ENCODE measurements at regions of chr12 and their contacts with region 1.

Region 1: DNA sequence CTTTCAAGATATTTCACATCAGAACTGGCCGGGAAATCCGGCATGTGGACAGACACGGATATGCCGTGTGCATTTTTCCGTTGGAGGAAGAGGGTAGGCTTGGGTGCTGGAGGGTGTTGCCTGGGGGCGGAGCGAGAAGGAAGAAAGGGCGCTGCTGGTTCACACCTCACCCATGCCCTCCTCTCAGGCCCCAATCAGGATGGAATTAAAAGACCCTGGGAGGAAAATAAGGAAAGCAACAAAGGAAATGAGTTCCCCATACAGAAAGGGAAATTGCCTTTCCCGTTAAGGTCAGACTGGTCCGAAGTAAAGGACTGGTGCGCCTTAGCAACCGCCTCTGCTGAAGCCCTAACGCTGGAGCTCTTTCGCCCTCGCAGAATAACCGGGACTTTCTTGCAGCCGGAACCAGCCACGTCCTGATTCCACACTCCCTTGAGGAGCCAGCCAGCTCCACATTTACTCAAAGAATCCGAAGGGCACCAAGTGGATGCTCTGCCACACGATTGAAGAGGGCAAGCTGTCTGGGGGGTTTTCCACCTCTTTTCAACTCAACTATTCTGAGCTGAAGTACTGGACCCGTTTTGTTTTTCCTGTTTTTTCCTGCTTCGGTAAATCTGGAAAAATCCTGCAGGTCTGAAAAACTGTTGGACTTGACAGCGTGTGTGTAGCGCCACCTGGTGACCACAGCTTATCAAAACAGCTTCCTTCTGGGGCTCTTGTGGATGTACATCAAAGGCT is 37.7 kb upstream of the BCL2L14 start:
- DNase-seq: peak; percentile 74
- ATAC-seq: peak; percentile 82
- H3K4me3 Mint-ChIP-seq: peak overlapping the region; percentile 56
- H3K27ac Mint-ChIP-seq: peak overlapping the region; percentile 79
- H3K4me1 Mint-ChIP-seq: peaks cover 26% of the 10 kb centered on the region
- H3K27me3 Mint-ChIP-seq: no peaks in the 10 kb centered on the region
- CTCF ChIP-seq: peak; percentile 89

Region 2: GRCh38 chr12:11553871-11554533 is 479.0 kb before region 1 on chr12:
- CTCF ChIA-PET with region 1: interaction called, 23 read pairs
- POLR2A ChIA-PET with region 1: no interaction called
- intact Hi-C with region 1: no loop called
- DNase-seq: peak; percentile 75
- ATAC-seq: peak; percentile 87
- H3K4me3 Mint-ChIP-seq: no peak overlapping the region
- H3K27ac Mint-ChIP-seq: no peak overlapping the region
- H3K4me1 Mint-ChIP-seq: peaks cover 22% of the 10 kb centered on the region
- H3K27me3 Mint-ChIP-seq: peaks cover 4% of the 10 kb centered on the region
- CTCF ChIP-seq: peak; percentile 52

Region 3: GRCh38 chr12:11730299-11731041 is 302.6 kb before region 1 on chr12:
- CTCF ChIA-PET with region 1: interaction called, 15 read pairs
- POLR2A ChIA-PET with region 1: no interaction called
- intact Hi-C with region 1: no loop called
- DNase-seq: no peak
- ATAC-seq: no peak
- H3K4me3 Mint-ChIP-seq: no peak overlapping the region
- H3K27ac Mint-ChIP-seq: peak overlapping the region; percentile 89
- H3K4me1 Mint-ChIP-seq: peaks cover 74% of the 10 kb centered on the region
- H3K27me3 Mint-ChIP-seq: no peaks in the 10 kb centered on the region
- CTCF ChIP-seq: no peak

Region 4: DNA sequence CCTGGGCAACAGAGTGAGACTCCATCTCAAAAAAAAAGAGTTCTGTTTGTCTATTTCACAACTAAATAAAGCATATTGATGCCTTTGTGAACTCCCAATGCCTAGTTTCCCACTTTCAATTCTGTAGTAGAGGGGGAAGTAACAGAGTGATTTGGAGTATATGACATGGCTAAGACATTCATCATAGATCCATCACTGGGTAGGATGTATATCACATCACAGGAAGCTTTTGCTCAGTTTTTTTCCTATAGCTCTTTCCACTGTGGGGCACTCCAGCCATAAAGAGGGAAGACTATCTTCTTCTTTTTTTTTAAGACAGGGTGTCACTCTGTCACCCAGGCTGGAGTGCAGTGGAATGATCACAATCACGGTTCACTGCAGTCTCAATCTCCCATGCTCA is 116.2 kb before region 1 on chr12:
- CTCF ChIA-PET with region 1: interaction called, 10 read pairs
- POLR2A ChIA-PET with region 1: no interaction called
- intact Hi-C with region 1: no loop called
- DNase-seq: no peak
- ATAC-seq: no peak
- H3K4me3 Mint-ChIP-seq: no peak overlapping the region
- H3K27ac Mint-ChIP-seq: no peak overlapping the region
- H3K4me1 Mint-ChIP-seq: no peaks in the 10 kb centered on the region
- H3K27me3 Mint-ChIP-seq: peaks cover under 1% of the 10 kb centered on the region
- CTCF ChIP-seq: no peak

Region 5: DNA sequence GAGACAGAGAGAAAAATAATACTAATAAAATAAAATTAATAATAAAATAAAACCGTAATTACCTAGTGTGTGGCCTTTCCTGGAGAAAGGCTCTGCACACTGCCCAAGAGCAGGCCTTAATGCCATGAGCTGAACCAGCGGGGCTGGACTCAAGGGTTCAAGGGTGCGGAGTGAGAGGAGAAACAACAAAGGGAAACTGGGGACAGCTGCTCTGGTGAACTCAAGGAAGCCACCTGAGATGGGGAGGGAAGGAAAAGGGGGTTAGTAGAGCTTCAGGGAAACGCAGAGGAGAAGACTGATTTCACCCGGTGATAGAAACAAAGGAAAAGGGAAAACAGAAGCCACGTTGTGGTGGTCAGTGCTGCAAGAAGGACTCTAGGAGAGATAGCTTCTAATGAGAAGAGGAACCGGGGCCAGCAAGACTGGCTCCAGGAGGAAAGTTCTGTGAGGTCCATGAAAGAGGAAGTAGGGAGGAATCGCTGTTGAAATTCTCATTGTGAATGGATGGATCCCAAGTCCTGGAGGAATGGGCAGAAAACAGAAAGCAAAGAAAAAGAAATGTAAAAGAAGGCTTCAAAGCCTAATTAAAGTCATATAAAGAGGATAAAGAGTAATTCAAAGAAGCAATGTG is 10.6 kb before region 1 on chr12:
- CTCF ChIA-PET with region 1: interaction called, 13 read pairs
- POLR2A ChIA-PET with region 1: no interaction called
- intact Hi-C with region 1: no loop called
- DNase-seq: no peak
- ATAC-seq: no peak
- H3K4me3 Mint-ChIP-seq: no peak overlapping the region
- H3K27ac Mint-ChIP-seq: no peak overlapping the region
- H3K4me1 Mint-ChIP-seq: peaks cover 29% of the 10 kb centered on the region
- H3K27me3 Mint-ChIP-seq: no peaks in the 10 kb centered on the region
- CTCF ChIP-seq: no peak

Region 6: DNA sequence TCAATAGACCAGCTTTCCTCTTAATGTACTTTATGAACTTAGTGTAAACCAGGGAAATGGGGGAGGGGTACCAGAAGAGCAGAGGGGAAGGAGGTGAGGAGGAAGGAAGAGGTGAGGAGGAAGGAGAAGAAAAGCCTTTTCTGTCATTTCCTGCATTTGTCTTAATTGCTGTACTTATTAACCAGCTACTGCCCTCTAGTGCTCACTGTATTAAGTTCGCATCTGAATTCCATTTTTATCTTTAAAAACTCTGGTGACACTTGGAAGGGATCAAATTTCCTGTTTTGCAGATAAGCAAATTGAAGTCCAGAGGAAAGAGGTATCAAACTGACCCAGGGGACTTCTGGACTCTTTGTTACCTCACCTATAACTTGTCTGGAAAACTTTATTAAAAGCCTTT is 294.8 kb after region 1 on chr12:
- CTCF ChIA-PET with region 1: interaction called, 77 read pairs
- POLR2A ChIA-PET with region 1: no interaction called
- intact Hi-C with region 1: loop called (anchors 5 kb)
- DNase-seq: peak; percentile 16
- ATAC-seq: peak; percentile 80
- H3K4me3 Mint-ChIP-seq: no peak overlapping the region
- H3K27ac Mint-ChIP-seq: peak overlapping the region; percentile 66
- H3K4me1 Mint-ChIP-seq: peaks cover 6% of the 10 kb centered on the region
- H3K27me3 Mint-ChIP-seq: no peaks in the 10 kb centered on the region
- CTCF ChIP-seq: peak; percentile 72